Naive thymus-derived CD8-positive, alpha-beta T cell (primary cell): ENCODE measurements at regions of chr1 and their contacts with region 1.

Region 1: DNA sequence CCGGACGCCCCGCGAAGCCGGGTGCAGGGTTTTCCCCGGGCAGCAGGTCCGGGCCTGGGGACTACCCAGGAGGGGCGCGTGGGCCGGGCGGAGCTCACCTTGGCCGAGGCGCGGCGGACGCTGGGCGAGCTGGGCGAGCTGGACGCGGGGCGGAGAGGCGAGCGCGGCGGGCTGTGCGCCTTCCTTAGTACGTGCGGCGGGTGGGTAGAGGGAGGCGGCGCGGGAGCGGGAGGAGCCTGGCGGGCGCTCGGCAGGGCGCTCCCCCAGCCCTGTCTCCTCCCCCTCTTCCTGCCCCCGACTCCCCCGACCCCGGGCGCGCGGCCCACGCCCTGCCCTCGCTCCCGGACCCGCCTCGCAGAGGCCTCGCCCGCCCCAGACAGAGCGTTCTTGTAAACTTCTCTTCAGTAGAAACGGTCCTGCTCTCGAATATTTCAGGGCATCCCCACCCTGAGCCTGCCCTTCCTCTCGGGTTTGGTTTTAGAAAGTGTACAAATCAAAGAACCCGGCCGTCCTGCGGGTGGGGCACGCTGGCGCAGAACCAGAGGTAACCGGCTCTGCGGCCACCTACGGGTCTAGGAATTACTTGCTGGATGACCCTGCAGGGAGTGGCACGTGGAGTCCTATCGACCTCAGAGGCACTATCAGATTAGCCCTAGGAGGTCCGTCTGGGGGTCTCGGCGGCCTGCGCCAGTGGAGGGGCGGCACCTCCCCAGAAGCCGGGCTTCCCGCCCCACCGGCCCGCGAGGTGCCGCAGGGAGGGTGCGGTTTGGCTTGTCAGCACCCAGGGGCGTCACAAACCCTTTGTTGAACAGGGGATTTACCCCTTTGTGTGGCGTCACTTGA is at the start of gene S100A10:
- DNase-seq: peak; percentile 69 to 88 (median 76)
- ATAC-seq: peak; percentile 82 to 84
- H3K4me3 Mint-ChIP-seq: peak within 1 kb of the TSS; percentile 93 to 99 (median 96)
- H3K27ac Mint-ChIP-seq: peak within 1 kb of the TSS; percentile 87 to 98 (median 94)
- H3K4me1 Mint-ChIP-seq: peaks cover 26 to 53% (median 51%) of the 10 kb centered on the region in 4 donors
- H3K27me3 Mint-ChIP-seq: no peaks in the 10 kb centered on the region
- polyA plus RNA-seq, gene S100A10: 629 to 783 (median 630) TPM

Region 2: DNA sequence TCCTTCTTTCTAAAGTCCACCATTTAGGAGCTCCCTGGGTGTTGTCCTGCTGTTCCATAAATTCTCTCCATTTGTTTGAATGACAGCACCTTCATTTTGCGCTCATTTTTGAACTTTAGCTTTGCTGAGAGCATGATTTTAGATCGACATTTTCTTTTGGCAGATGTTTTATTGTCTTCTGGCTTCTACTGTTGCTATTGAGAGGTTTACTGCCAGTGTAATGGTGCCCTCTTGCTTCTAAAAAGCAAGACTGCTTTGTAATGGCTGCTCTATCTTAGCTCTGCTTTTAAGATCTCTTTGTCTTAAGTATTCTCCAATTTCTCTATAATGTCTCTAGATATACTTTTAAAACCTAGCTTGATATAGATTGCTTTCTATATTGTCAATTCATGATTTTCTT is 112.4 kb before region 1 on chr1:
- POLR2A ChIA-PET with region 1: no interaction called
- DNase-seq: no peak
- ATAC-seq: no peak
- H3K4me3 Mint-ChIP-seq: no peak overlapping the region
- H3K27ac Mint-ChIP-seq: peak overlapping the region in 3 of 10 donors; percentile 5 to 25 (median 6)
- H3K4me1 Mint-ChIP-seq: peaks cover 0 to 14% (median 3%) of the 10 kb centered on the region in 4 donors
- H3K27me3 Mint-ChIP-seq: no peaks in the 10 kb centered on the region

Region 3: GRCh38 chr1:151956957-151957497 is 36.8 kb before region 1 on chr1:
- POLR2A ChIA-PET with region 1: no interaction called
- DNase-seq: no peak
- ATAC-seq: no peak
- H3K4me3 Mint-ChIP-seq: no peak overlapping the region
- H3K27ac Mint-ChIP-seq: no peak overlapping the region
- H3K4me1 Mint-ChIP-seq: peaks cover 0 to 1% (median 0%) of the 10 kb centered on the region in 4 donors
- H3K27me3 Mint-ChIP-seq: peaks cover 0 to 2% (median 0%) of the 10 kb centered on the region in 5 donors

Region 4: GRCh38 chr1:151968058-151968457 is 25.8 kb before region 1 on chr1:
- POLR2A ChIA-PET with region 1: interaction called, 18 read pairs
- DNase-seq: peak in 9 of 10 donors; percentile 34 to 81 (median 63)
- ATAC-seq: peak; percentile 99 to 100
- H3K4me3 Mint-ChIP-seq: peak overlapping the region in 1 of 10 donors; percentile 30
- H3K27ac Mint-ChIP-seq: peak overlapping the region in 1 of 10 donors; percentile 48
- H3K4me1 Mint-ChIP-seq: peaks cover 4 to 16% (median 10%) of the 10 kb centered on the region in 4 donors
- H3K27me3 Mint-ChIP-seq: peaks cover 0 to 9% (median 4%) of the 10 kb centered on the region in 5 donors

Region 5: DNA sequence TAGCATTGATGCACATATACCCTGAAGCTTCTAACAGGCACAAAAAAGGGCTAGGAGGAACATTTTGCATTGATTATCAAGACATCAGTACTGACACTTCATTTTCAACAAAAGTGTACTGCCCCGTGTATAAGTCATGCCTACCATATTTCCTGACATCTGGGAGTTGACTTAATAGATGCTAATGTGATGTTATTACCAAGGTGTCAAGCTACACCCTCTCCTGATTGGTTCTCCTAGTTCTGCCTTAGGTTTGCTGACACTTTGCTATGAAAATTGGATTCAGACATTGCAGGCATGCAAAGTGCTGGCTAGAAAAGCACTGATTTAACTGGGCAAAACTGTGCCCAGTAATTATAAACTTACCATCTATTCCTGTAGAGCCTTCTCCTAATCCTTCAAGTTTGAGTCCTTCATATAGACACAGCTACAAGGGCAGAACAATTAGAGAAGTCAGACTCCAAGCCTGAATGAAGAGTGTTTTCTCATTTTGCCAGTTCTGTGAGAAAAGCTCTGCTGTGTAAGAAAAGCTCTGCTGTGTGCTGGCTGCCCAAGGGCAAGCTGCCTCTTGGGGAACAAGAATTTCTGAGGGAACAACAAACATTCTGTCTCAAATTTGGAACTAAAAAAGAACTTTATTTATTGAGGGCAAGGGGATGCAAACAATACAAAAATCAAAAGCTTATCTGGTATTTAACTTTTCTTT is 11.4 kb before region 1 on chr1:
- POLR2A ChIA-PET with region 1: interaction called, 10 read pairs
- DNase-seq: no peak
- ATAC-seq: no peak
- H3K4me3 Mint-ChIP-seq: no peak overlapping the region
- H3K27ac Mint-ChIP-seq: peak overlapping the region in 3 of 10 donors; percentile 17 to 32 (median 20)
- H3K4me1 Mint-ChIP-seq: peaks cover 24 to 50% (median 42%) of the 10 kb centered on the region in 4 donors
- H3K27me3 Mint-ChIP-seq: no peaks in the 10 kb centered on the region